ENCODE measurements at regions of chr15 and their contacts with region 1.

Region 1: DNA sequence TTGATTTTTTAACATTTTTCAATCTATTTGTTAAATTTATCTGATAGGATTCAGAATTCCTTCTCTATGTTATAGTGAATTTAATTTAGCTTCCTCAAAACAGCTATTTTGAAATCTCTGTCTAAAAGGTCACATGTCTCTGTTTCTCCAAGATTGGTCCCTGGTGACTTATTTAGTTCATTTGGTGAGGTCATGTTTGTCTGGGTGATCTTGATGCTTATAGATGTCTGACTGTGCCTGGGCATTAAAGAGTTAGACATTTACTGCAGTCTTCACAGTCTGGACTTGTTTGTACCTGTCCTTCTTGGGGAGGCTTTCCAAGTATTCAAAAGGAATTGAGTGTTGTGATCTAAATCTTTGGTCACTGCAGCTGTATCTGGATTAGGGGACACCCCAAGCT is 169.5 kb upstream of the C2CD4B start:
- DNase-seq: no peak
- H3K4me3 ChIP-seq: no peak overlapping the region
- H3K27me3 ChIP-seq: peaks cover 2% of the 10 kb centered on the region; the same call in 1 of the 2 replicates
- CTCF ChIP-seq: no peak

Region 2: DNA sequence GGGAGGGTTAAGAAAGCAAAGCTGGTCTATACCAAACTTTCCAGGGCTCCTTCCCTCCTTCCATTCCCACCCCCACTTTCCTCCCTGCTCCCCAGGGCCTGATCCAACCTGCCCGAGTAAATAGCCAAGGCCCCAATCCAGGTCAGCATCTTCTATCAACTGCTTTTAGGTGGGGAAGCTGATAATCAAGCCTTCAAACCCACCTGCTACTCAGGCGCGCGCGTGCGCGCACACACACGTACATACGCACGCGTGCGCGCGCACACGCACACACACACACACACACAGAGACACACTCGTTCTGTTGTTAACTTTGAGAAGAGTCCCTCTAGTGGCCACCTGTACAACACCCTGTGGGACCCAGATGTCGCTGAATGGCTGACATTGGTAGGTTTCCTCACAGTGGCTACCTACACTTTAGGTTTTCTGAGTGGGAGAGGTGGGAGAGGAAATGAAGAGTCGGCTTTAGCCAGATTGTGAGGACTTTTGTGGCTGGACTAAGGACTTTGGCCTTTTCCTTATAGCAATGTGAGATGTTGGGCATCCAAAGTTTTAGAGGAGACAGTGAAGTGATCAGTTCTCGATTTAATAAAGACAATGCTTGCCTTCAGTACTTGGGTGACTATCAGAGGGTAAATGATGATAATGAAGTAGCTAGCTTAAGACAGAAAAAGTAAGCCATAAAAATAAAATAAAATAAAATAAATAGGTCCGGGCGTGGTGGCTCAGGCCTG is 10.4 kb after region 1 on chr15:
- CTCF ChIA-PET with region 1: interaction called, 12 read pairs
- POLR2A ChIA-PET with region 1: no interaction called
- DNase-seq: no peak
- H3K4me3 ChIP-seq: no peak overlapping the region
- H3K27me3 ChIP-seq: no peaks in the 10 kb centered on the region
- CTCF ChIP-seq: peak; percentile 64

Region 3: DNA sequence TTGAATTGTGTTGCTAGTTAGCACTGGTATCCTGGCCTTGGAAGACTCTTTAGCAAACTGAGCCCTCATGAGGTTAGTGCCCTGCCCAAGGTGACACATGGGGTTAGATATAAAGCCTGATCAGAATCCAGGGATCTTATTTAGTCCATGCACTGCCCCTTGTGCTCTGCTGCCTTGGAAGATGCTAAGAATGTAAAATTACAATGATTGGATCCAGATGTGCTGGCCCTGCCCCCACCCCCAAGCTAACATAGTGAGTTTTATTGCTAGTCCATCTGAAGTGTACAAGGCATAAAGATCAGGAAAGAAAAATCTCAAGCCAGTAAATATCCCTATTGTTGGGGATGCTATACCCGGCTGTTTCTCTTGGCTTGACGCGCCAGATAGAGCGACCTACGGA is 78.6 kb after region 1 on chr15:
- CTCF ChIA-PET with region 1: no interaction called
- POLR2A ChIA-PET with region 1: no interaction called
- DNase-seq: peak; percentile 31
- H3K4me3 ChIP-seq: no peak overlapping the region
- H3K27me3 ChIP-seq: no peaks in the 10 kb centered on the region
- CTCF ChIP-seq: no peak

Region 4: GRCh38 chr15:62453981-62454380 is 119.4 kb after region 1 on chr15:
- CTCF ChIA-PET with region 1: no interaction called
- POLR2A ChIA-PET with region 1: no interaction called
- DNase-seq: no peak
- H3K4me3 ChIP-seq: no peak overlapping the region
- H3K27me3 ChIP-seq: no peaks in the 10 kb centered on the region
- CTCF ChIP-seq: no peak

Measured in BJ (cell line).